ENCODE measurements at regions of chr11 and their contacts with region 1.

Region 1: GRCh38 chr11:29300441-29300840 is 716.4 kb downstream of the KCNA4 start:
- DNase-seq: no peak
- H3K4me3 ChIP-seq: no peak overlapping the region
- H3K27ac ChIP-seq: no peak overlapping the region
- H3K4me1 ChIP-seq: no peaks in the 10 kb centered on the region
- H3K27me3 ChIP-seq: no peaks in the 10 kb centered on the region
- CTCF ChIP-seq: no peak
- EP300 ChIP-seq: no peak
- POLR2A ChIP-seq: no peak

Region 2: GRCh38 chr11:29129850-29130249 is 170.6 kb before region 1 on chr11:
- intact Hi-C with region 1: loop called in 1 of 4 experiments (anchors 5 kb)
- DNase-seq: no peak
- H3K4me3 ChIP-seq: no peak overlapping the region
- H3K27ac ChIP-seq: no peak overlapping the region
- H3K4me1 ChIP-seq: no peaks in the 10 kb centered on the region
- H3K27me3 ChIP-seq: no peaks in the 10 kb centered on the region
- CTCF ChIP-seq: no peak
- EP300 ChIP-seq: no peak
- POLR2A ChIP-seq: no peak

Region 3: GRCh38 chr11:29343465-29344333 is 43.3 kb after region 1 on chr11:
- intact Hi-C with region 1: no loop called
- DNase-seq: peak in 3 of 5 donors; percentile 14 to 36 (median 26)
- H3K4me3 ChIP-seq: no peak overlapping the region
- H3K27ac ChIP-seq: no peak overlapping the region
- H3K4me1 ChIP-seq: no peaks in the 10 kb centered on the region
- H3K27me3 ChIP-seq: no peaks in the 10 kb centered on the region
- CTCF ChIP-seq: no peak
- EP300 ChIP-seq: no peak
- POLR2A ChIP-seq: no peak

Measured in ovary (tissue), 10 donors.